Dorsolateral prefrontal cortex (tissue), 120 donors: ENCODE measurements at regions of chr20 and their contacts with region 1.

Region 1: GRCh38 chr20:2991532-2991931 is 51.9 kb upstream of the GNRH2 start:
- DNase-seq: no peak
- H3K4me3 ChIP-seq: no peak overlapping the region
- H3K27ac ChIP-seq: no peak overlapping the region
- H3K27me3 ChIP-seq: no peaks in the 10 kb centered on the region
- CTCF ChIP-seq: no peak

Region 2: DNA sequence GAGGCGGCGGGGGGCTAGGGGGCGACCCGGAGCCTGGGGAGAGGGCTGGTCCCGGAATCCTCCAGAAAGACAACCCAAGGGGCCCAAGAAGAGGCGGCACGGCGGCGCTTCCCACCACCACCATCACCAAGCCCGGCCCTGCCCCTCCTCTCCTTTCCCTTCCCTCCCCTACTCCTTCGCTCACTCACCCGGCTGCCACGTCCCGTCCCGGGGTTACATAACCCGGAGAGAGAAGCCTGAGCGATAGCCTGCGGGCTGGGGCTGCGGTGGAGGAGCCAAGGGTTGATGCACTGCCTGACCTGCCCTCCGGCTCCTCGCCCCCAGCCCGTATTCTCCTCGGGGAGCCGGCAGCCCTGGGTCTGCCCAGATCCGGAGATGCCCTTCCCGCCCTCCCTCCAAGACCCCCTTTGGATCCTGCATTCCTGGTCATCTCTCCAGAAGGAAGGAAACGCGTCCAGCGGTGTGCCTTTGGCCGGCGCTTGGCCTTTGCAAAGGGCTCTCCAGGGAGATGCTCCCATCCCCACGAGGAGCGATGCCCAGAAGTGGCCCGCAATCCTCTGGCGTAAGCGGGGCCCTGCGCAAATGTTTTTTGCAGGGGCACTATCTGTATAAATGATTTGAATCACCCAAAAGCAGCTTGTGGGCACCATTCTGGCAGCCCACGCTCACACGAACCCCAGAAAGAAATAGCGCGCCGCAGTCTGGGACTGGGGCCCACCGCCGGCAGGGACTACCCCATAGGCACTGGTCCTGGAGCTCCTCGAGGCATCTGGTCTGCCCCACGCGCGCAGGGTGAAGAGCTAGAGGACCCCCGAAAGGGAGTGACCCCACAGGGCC is 186.5 kb before region 1 on chr20:
- intact Hi-C with region 1: no loop called
- DNase-seq: no peak
- H3K4me3 ChIP-seq: no peak overlapping the region
- H3K27ac ChIP-seq: no peak overlapping the region
- H3K27me3 ChIP-seq: peaks cover 9 to 98% (median 69%) of the 10 kb centered on the region in 45 donors
- CTCF ChIP-seq: no peak

Region 3: GRCh38 chr20:2919518-2920245 is 71.8 kb before region 1 on chr20:
- intact Hi-C with region 1: loop called in 1 of 2 experiments (anchors 5 kb)
- DNase-seq: no peak
- H3K4me3 ChIP-seq: no peak overlapping the region
- H3K27ac ChIP-seq: peak overlapping the region in 1 of 59 donors; percentile 10
- H3K27me3 ChIP-seq: no peaks in the 10 kb centered on the region
- CTCF ChIP-seq: no peak

Region 4: DNA sequence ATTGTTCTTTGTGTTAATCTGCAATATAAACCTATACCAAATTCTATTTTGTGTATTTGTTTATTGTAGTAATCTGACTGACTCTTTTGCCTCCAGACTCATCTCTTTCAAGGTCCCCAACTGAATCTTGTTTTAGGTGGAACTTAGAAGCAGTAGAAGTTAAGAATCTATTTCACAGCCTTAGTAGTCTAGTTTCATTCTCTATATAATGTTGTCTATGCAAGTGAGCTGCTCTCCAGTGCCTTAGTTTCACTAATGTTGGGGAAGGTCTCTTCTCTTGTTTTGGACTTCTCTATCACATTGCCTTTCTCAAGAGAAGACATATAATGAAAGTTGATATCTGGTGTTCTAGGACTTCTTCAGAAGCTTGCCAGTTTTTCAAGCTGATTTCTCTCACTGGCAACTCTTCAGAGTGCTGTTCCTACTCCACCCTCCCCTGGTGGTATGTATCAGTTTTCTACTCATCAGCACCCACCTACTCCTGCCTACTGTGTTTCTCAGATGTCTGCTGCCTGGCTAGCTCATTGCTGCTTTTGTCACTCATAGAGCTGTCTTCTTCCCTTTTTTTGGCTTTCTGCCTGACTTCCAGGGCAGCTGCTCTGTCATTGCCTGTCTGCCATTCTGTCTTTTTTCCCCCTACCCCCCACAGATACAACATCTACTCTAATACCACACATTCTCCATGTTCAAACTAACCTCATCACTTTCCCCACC is 36.1 kb before region 1 on chr20:
- intact Hi-C with region 1: loop called in 1 of 2 experiments (anchors 5 kb)
- DNase-seq: peak in 2 of 10 donors; percentile 33 to 34
- H3K4me3 ChIP-seq: no peak overlapping the region
- H3K27ac ChIP-seq: peak overlapping the region in 24 of 59 donors; percentile 0 to 71 (median 34)
- H3K27me3 ChIP-seq: no peaks in the 10 kb centered on the region
- CTCF ChIP-seq: no peak

Region 5: GRCh38 chr20:3646651-3647050 is 655.1 kb after region 1 on chr20:
- intact Hi-C with region 1: no loop called
- DNase-seq: no peak
- H3K4me3 ChIP-seq: no peak overlapping the region
- H3K27ac ChIP-seq: peak overlapping the region in 9 of 59 donors; percentile 1 to 32 (median 21)
- H3K27me3 ChIP-seq: no peaks in the 10 kb centered on the region
- CTCF ChIP-seq: no peak